ENCODE measurements at regions of chr4 and their contacts with region 1.

Region 1: GRCh38 chr4:1726146-1726934 is 5.0 kb downstream of the TACC3 start:
- DNase-seq: peak; percentile 91
- ATAC-seq: peak; percentile 35
- H3K4me3 Mint-ChIP-seq: no peak overlapping the region
- H3K27ac Mint-ChIP-seq: peak overlapping the region; percentile 21
- H3K4me1 Mint-ChIP-seq: peaks cover 59% of the 10 kb centered on the region
- H3K27me3 Mint-ChIP-seq: no peaks in the 10 kb centered on the region

Region 2: DNA sequence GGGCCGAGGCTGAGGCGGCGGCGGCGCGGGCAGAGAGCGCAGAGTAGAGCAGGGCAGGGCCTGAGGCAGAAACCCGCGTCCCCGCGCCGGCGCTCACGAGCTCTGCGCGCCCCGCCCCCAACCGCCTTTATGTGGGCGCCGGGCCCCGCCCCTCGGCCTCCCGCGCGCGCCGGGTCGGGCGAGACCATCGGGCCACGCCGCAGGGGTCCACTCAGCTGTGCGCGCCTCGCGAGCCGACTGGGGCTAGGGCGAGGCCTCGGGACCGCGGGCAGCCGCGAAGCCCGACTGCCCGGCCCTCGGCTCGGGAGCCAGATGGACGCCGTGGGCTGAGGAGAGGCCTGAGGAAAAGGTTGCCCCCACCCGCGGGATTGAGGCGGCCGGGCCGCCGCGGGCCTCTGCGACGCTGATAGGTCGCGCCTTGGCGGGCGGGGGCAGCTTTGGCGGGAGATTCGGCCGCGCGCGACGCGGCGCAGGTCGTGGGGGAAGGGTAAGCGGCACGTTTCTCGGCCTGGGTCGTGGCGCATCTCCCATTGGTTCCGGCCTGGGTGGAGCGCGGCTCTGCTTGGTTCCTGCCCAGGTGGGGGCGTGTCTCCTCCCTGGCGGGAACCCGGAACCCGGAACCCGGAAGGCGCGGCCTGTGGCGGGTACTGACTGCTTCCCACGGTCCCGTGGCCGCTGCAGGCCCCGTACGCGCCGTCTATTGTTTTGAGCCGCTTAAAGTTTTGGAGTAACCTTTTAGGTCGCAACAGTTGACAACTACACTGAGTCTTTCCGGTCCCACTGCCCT is 13.9 kb before region 1 on chr4 and contains the start of gene SLBP:
- CTCF ChIA-PET with region 1: interaction called, 10 read pairs
- POLR2A ChIA-PET with region 1: interaction called, 112 read pairs
- DNase-seq: peak; percentile 99
- ATAC-seq: peak; percentile 90
- H3K4me3 Mint-ChIP-seq: peak within 1 kb of the TSS; percentile 99
- H3K27ac Mint-ChIP-seq: peak within 1 kb of the TSS; percentile 99
- H3K4me1 Mint-ChIP-seq: peaks cover 75% of the 10 kb centered on the region
- H3K27me3 Mint-ChIP-seq: no peaks in the 10 kb centered on the region
- total RNA-seq, gene SLBP: 132 to 136 TPM

Measured in activated CD8-positive, alpha-beta T cell treated with anti-CD3 and anti-CD28 coated beads, Interleukin-2, amount 10 ng/mL, durations not matched to agents 7 days and 5 days (primary cell).